GM10248 (cell line): ENCODE measurements at regions of chr18 and their contacts with region 1.

Region 1: GRCh38 chr18:56650944-56651770 is at the start of gene WDR7:
- DNase-seq: peak; percentile 85
- CTCF ChIP-seq: no peak

Region 2: DNA sequence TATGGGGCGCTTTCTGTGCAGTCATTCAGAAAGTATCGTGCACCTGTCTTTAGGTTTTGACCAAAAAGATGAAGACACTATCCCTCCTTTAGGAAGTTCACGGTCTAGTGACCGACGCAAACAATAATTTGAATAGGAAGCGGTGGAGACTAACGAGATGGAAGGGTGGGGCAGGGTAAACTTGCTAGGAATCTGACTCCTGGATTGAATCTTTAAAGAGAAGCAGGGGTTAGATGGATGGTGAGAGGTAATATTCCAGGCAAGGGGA is 12.1 kb before region 1 on chr18:
- CTCF ChIA-PET with region 1: interaction called, 19 read pairs
- POLR2A ChIA-PET with region 1: interaction called, 3 read pairs
- DNase-seq: no peak
- CTCF ChIP-seq: no peak

Region 3: DNA sequence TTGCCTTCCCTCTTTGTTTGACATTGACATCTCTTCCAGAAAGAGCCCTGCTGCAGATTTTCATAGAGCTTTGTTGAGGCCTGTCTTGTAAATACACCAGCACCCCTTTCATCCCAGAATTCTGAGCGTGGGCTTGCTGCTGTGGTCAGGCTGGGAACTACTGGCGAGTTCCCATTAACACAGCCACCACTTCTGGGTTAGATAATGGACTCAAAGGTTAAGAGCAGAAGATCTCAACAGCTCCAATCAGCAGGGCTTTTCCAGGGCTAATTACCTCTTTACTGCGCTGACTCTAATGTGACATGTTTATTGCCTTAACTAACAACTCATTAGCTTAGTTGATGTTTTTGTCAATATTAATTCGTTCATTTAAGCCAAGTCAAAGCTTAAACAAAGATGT is 259.8 kb after region 1 on chr18:
- CTCF ChIA-PET with region 1: no interaction called
- POLR2A ChIA-PET with region 1: no interaction called
- DNase-seq: no peak
- CTCF ChIP-seq: no peak

Region 4: DNA sequence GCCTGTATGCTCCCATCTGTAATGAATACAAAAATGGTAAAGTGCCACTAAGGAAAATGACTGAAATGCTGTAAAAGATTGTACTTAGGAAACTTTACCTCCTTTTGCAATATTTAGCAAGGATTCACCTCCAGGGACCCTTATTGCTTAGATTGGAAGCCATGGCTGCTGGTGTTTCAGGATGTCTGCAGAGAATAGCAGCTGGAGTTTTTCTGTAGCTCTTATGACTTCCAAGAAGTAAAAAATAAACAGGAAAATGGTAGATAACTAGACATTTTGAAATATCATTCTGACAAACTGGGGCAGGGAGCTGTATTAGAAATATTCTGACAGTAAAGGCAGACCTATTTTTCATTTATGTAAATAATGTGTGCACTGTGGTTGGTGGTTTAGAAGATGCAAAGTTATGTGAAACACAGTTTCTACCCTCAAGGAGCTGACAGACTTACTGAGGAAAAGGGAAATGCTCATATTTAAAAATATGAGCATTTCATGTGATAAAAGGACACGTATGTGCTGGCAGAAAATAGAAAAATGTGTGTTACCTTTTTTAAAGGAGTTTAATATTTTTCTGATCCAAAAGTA is 270.8 kb after region 1 on chr18:
- CTCF ChIA-PET with region 1: no interaction called
- POLR2A ChIA-PET with region 1: no interaction called
- DNase-seq: no peak
- CTCF ChIP-seq: no peak